ENCODE measurements at regions of chr16 and their contacts with region 1.

Region 1: GRCh38 chr16:30018731-30019158 is 4.3 kb upstream of the C16orf92 start:
- DNase-seq: no peak
- H3K4me3 Mint-ChIP-seq: no peak overlapping the region
- H3K27ac Mint-ChIP-seq: no peak overlapping the region
- H3K4me1 Mint-ChIP-seq: peaks cover 9% of the 10 kb centered on the region
- H3K27me3 Mint-ChIP-seq: peaks cover 3% of the 10 kb centered on the region
- CTCF ChIP-seq: no peak

Region 2: GRCh38 chr16:29862884-29863668 is 155.7 kb before region 1 on chr16 and contains the start of gene CDIPT:
- CTCF ChIA-PET with region 1: no interaction called
- intact Hi-C with region 1: loop called (anchors 2 kb)
- DNase-seq: peak; percentile 95
- H3K4me3 Mint-ChIP-seq: peak within 1 kb of the TSS; percentile 89
- H3K27ac Mint-ChIP-seq: peak within 1 kb of the TSS; percentile 99
- H3K4me1 Mint-ChIP-seq: peaks cover 7% of the 10 kb centered on the region
- H3K27me3 Mint-ChIP-seq: peaks cover 9% of the 10 kb centered on the region
- CTCF ChIP-seq: peak; percentile 23
- total RNA-seq, gene CDIPT: 62.7 and 64.1 TPM in 2 replicates

Region 3: GRCh38 chr16:30063893-30064731 is 45.4 kb after region 1 on chr16:
- CTCF ChIA-PET with region 1: no interaction called
- intact Hi-C with region 1: no loop called
- DNase-seq: peak; percentile 68
- H3K4me3 Mint-ChIP-seq: peak overlapping the region; percentile 83
- H3K27ac Mint-ChIP-seq: peak overlapping the region; percentile 87
- H3K4me1 Mint-ChIP-seq: peaks cover 37% of the 10 kb centered on the region
- H3K27me3 Mint-ChIP-seq: no peaks in the 10 kb centered on the region
- CTCF ChIP-seq: no peak

Region 4: GRCh38 chr16:30112197-30113030 is 93.7 kb after region 1 on chr16:
- CTCF ChIA-PET with region 1: no interaction called
- intact Hi-C with region 1: no loop called
- DNase-seq: peak; percentile 75
- H3K4me3 Mint-ChIP-seq: peak overlapping the region; percentile 34
- H3K27ac Mint-ChIP-seq: peak overlapping the region; percentile 64
- H3K4me1 Mint-ChIP-seq: peaks cover 32% of the 10 kb centered on the region
- H3K27me3 Mint-ChIP-seq: no peaks in the 10 kb centered on the region
- CTCF ChIP-seq: peak; percentile 92

Measured in Calu3 (cell line).